ENCODE measurements at regions of chr1 and their contacts with region 1.

Region 1: GRCh38 chr1:150515328-150516048 is at the start of gene FALEC:
- DNase-seq: peak; percentile 76
- ATAC-seq: peak; percentile 99
- H3K4me3 ChIP-seq: peak within 1 kb of the TSS; percentile 66 to 74
- H3K27ac ChIP-seq: peak within 1 kb of the TSS; percentile 76
- H3K4me1 ChIP-seq: no peaks in the 10 kb centered on the region
- H3K27me3 ChIP-seq: no peaks in the 10 kb centered on the region
- CTCF ChIP-seq: no peak
- total RNA-seq, gene FALEC: 1.0 TPM

Region 2: DNA sequence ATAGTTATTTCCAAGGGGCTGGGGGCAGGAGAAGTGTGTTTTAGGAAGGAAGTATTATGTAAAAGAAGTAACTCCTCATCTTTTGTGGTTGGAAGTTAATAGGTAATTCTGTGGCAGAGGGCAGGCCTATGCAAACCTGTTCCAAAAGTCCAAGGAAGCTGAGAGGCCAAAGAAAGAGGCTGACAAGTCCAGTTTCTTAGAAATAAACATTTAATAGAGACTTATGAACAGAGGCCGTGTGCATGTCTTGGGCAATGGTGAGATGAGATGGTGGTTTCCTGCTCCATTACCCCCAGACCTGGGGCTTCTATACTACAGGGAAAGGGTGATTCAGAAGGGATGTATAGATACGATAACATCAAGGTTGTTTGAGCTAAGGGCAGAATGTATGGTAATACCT is 265.6 kb before region 1 on chr1:
- CTCF ChIA-PET with region 1: no interaction called
- POLR2A ChIA-PET with region 1: interaction called, 10 read pairs
- in situ Hi-C with region 1: no loop called
- intact Hi-C with region 1: no loop called
- DNase-seq: no peak
- ATAC-seq: 0 out of 2 replicates have a peak, but pooled peaks have one; percentile 35
- H3K4me3 ChIP-seq: no peak overlapping the region
- H3K27ac ChIP-seq: no peak overlapping the region
- H3K4me1 ChIP-seq: no peaks in the 10 kb centered on the region
- H3K27me3 ChIP-seq: no peaks in the 10 kb centered on the region
- CTCF ChIP-seq: no peak

Region 3: GRCh38 chr1:150486964-150487762 is 28.3 kb before region 1 on chr1 and contains the start of gene TARS2:
- CTCF ChIA-PET with region 1: no interaction called
- POLR2A ChIA-PET with region 1: interaction called, 13 read pairs
- in situ Hi-C with region 1: no loop called
- intact Hi-C with region 1: no loop called
- DNase-seq: peak; percentile 96
- ATAC-seq: peak; percentile 100
- H3K4me3 ChIP-seq: peak within 1 kb of the TSS; percentile 95 to 100
- H3K27ac ChIP-seq: peak within 1 kb of the TSS; percentile 94
- H3K4me1 ChIP-seq: peaks cover 7% of the 10 kb centered on the region
- H3K27me3 ChIP-seq: no peaks in the 10 kb centered on the region
- CTCF ChIP-seq: no peak
- total RNA-seq, gene TARS2: 28.2 TPM

Region 4: DNA sequence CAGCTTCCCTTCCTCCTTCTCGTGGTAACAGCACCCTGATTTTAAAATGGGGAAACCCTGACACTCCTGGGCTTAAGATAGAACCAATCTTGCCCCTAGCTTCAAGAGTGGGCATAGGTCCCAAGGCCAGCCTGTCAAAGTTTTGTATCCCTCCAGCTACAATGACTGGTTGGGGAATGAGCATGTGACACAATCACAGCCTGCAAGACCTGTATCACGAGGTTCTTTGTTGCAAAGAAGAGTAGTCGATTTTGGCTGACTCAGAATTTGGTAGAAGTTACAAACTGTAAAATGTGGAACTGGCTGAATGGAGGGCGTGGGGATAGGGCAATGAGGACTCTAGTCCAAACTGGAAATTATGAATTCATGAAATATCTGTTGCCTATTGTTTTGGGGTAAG is 273.9 kb after region 1 on chr1:
- CTCF ChIA-PET with region 1: no interaction called
- POLR2A ChIA-PET with region 1: no interaction called
- in situ Hi-C with region 1: no loop called
- intact Hi-C with region 1: no loop called
- DNase-seq: no peak
- ATAC-seq: no peak
- H3K4me3 ChIP-seq: no peak overlapping the region
- H3K27ac ChIP-seq: no peak overlapping the region
- H3K4me1 ChIP-seq: no peaks in the 10 kb centered on the region
- H3K27me3 ChIP-seq: no peaks in the 10 kb centered on the region
- CTCF ChIP-seq: no peak